Posterior cingulate gyrus (tissue), 11 donors: ENCODE measurements at regions of chr16 and their contacts with region 1.

Region 1: DNA sequence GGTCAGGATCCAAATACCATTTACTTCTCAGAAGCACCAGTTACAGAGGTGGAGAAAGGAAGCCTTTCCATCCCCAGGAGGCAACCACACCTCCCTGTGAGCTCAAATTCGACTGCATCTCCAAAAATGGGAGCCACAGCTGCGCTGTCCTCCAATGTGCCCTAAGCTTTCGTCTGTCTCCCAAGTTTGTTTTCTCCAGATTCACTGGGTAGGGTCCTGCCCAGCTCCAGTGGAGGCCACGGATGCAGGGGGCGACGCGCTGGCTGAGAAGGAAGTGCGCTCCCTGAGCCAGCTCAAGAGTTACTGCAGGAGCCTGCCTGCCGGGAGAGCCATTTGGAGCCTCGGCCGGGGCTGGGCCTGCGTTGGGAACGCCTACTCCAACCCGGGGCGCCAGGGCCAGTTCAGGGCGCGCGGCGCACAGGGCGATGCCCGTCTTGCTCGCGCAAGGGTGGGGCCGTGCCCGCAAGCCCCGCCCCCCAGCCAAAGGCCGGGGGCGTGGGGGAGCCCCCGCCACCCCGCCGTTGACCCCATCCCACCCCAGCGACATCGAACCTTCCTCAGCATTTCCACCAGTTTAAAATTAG is 19.5 kb downstream of the SIAH1 start:
- DNase-seq: peak; percentile 74 to 98 (median 86)

Region 2: DNA sequence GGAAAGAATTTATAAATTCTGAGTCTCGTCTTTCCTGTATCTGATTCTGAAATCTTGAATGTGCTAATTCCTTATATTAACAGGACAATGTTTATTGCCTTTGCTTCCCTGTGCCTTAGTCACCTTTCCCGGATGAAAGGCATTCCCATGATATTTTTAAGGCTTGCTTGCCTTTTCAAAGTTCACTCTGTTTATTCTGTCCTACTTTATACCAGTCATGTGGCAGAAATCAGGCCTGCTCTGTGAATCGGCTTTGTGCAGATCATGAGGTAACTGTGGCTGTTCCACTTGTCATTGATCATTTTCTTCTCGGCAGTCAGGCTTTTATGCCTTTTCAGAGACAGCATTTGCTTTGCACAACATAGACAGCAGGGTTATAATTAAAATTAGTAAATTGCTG is 89.6 kb before region 1 on chr16:
- intact Hi-C with region 1: loop called (anchors 10 kb)
- DNase-seq: peak in 1 of 10 donors; percentile 16

Region 3: GRCh38 chr16:48420437-48420836 is 54.8 kb after region 1 on chr16:
- intact Hi-C with region 1: no loop called
- DNase-seq: no peak